Activated CD4-positive, alpha-beta T cell treated with anti-CD3 and anti-CD28 coated beads for 36 hours (primary cell): ENCODE measurements at regions of chr6 and their contacts with region 1.

Region 1: GRCh38 chr6:28349892-28350737 is at the start of gene ZKSCAN3:
- DNase-seq: peak; percentile 94
- ATAC-seq: peak; percentile 100
- H3K4me3 Mint-ChIP-seq: peak within 1 kb of the TSS; percentile 96
- H3K27ac Mint-ChIP-seq: peak within 1 kb of the TSS; percentile 93
- H3K4me1 Mint-ChIP-seq: peaks cover 22% of the 10 kb centered on the region
- H3K27me3 Mint-ChIP-seq: peaks cover 7% of the 10 kb centered on the region
- total RNA-seq, gene ZKSCAN3: 2.2 to 3.1 TPM

Region 2: DNA sequence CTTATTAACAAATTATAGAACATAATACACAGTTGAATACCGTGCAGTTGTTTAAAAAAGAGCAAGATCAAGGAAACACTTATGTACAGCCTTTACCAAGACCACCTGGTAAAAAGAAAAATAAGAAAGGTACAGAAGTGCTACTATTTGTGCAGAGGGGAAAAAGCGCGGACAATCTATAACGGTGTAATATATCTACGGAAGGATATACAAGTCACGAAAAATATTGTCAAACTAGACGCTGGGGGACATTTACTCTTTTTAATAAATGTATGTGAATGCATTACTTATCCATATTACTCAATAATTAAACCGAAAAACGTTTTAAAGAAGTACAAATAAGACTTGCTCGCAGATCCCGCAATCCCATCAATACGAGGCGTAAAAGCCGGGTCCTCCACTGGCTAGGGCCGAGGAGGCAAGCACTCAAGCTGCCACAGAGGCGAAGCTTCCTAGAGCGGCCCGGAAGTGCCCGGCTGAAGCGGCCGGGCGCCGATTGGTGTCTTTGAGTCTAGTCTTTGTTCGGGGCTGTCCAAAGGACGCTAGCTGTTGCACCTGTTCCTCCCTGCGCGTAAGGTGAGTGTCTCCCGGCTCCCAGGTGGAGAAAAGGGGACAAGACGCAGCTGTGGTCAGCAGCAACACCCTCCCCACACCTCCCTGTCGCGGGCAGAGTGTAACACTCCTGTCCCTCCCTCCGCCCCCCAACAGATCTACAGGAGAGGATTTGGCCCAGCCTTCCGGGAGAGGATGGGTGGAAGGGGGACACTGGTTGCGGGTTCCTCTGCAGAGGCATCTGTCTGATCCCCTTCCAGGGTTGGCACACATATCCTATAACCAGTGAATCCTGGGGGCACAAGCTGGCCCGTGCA is 225.8 kb before region 1 on chr6 and contains the start of gene ZSCAN16:
- CTCF ChIA-PET with region 1: no interaction called
- POLR2A ChIA-PET with region 1: no interaction called
- intact Hi-C with region 1: loop called in 1 of 2 experiments (anchors 1 kb)
- DNase-seq: peak; percentile 82
- ATAC-seq: peak; percentile 94
- H3K4me3 Mint-ChIP-seq: peak within 1 kb of the TSS; percentile 89
- H3K27ac Mint-ChIP-seq: peak within 1 kb of the TSS; percentile 91
- H3K4me1 Mint-ChIP-seq: peaks cover 43% of the 10 kb centered on the region
- H3K27me3 Mint-ChIP-seq: no peaks in the 10 kb centered on the region
- total RNA-seq, gene ZSCAN16: 2.1 to 2.6 TPM

Region 3: GRCh38 chr6:28266962-28267694 is 83.0 kb before region 1 on chr6 and contains the start of gene ZSCAN26:
- CTCF ChIA-PET with region 1: no interaction called
- POLR2A ChIA-PET with region 1: no interaction called
- intact Hi-C with region 1: loop called (anchors 2 kb)
- DNase-seq: peak; percentile 91
- ATAC-seq: peak; percentile 90
- H3K4me3 Mint-ChIP-seq: no peak within 1 kb of the TSS
- H3K27ac Mint-ChIP-seq: no peak within 1 kb of the TSS
- H3K4me1 Mint-ChIP-seq: peaks cover 32% of the 10 kb centered on the region
- H3K27me3 Mint-ChIP-seq: no peaks in the 10 kb centered on the region
- total RNA-seq, gene ZSCAN26: 5.0 to 6.7 TPM

Region 4: DNA sequence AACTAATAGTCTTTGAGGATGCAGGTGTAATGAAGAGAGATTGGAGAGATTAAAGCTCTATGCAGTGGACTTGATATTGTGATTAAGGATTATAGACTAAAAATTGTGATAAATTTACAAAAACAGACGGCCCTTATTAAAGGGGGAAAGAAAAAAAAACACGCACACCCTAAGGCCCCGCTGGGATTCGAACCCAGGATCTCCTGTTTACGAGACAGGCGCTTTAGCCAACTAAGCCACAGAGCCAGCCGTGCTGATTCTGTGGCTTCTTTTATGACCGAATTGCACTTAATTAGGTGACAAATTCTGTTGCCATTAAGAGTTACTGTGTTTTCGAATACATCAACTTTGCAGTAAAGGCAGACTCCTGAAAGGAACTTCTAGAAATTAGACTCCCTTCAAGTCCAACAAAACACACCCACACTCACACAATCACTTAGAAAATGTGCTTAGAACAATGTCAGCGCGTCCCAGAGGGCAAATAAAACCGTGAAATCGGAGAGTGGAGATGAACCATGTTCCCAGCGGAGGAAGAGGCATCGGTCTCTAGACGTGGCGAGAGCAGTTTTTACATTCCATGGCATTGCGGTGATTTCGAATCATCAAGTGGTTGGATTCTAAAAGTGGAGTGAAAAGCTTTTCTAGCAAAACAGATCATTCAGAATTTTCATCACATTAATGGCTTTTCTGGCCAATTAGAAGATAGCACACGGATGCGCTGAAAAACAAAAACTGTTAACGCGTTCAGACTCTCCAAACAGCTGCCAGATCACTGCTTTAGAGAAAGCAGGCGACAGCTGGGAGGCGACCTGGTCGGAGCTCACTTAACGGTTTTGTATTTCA is 298.1 kb after region 1 on chr6:
- CTCF ChIA-PET with region 1: no interaction called
- POLR2A ChIA-PET with region 1: no interaction called
- intact Hi-C with region 1: no loop called
- DNase-seq: peak; percentile 83
- ATAC-seq: peak; percentile 74
- H3K4me3 Mint-ChIP-seq: peak overlapping the region; percentile 78
- H3K27ac Mint-ChIP-seq: peak overlapping the region; percentile 26
- H3K4me1 Mint-ChIP-seq: peaks cover 7% of the 10 kb centered on the region
- H3K27me3 Mint-ChIP-seq: peaks cover 50% of the 10 kb centered on the region